ENCODE measurements at regions of chr14 and their contacts with region 1.

Region 1: GRCh38 chr14:57317316-57317715 is 48.5 kb downstream of the AP5M1 start:
- DNase-seq: peak; percentile 81
- ATAC-seq: peak; percentile 72
- H3K4me3 Mint-ChIP-seq: no peak overlapping the region
- H3K27ac Mint-ChIP-seq: no peak overlapping the region
- H3K4me1 Mint-ChIP-seq: peaks cover 4% of the 10 kb centered on the region
- H3K27me3 Mint-ChIP-seq: peaks cover 5% of the 10 kb centered on the region
- CTCF ChIP-seq: peak; percentile 74

Region 2: DNA sequence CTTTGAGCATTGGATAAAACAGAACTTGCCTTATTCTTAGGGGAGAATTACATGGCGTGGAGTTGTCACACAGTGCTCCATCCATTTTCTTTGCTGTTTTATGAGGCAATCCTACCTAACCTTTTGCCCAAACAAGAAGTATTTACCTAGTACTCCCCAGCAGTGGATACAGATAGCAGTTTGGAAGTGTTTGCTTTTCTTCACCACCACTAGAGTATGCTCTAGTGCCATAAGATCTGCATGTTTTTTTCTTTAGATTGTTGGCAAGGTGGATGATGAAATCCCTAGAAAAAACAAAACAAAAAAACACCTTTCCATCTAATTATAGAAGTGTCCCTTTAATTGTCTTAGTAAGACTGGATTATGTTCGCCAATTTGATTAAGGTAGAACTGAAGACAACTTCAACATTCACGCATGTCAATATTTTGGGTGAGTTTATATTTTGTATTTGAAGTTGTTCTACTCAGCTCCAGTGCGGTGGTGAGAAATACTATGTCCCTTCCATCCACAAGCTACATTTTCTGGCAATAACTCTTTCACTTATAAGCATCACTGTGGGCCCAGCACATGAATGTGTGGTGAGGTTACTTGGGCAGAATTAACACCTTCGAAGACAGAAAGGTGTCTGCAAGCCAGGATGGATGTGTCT is 761.3 kb before region 1 on chr14:
- CTCF ChIA-PET with region 1: no interaction called
- POLR2A ChIA-PET with region 1: no interaction called
- intact Hi-C with region 1: loop called (anchors 5 kb)
- DNase-seq: no peak
- ATAC-seq: no peak
- H3K4me3 Mint-ChIP-seq: no peak overlapping the region
- H3K27ac Mint-ChIP-seq: no peak overlapping the region
- H3K4me1 Mint-ChIP-seq: no peaks in the 10 kb centered on the region
- H3K27me3 Mint-ChIP-seq: peaks cover 15% of the 10 kb centered on the region
- CTCF ChIP-seq: no peak

Region 3: DNA sequence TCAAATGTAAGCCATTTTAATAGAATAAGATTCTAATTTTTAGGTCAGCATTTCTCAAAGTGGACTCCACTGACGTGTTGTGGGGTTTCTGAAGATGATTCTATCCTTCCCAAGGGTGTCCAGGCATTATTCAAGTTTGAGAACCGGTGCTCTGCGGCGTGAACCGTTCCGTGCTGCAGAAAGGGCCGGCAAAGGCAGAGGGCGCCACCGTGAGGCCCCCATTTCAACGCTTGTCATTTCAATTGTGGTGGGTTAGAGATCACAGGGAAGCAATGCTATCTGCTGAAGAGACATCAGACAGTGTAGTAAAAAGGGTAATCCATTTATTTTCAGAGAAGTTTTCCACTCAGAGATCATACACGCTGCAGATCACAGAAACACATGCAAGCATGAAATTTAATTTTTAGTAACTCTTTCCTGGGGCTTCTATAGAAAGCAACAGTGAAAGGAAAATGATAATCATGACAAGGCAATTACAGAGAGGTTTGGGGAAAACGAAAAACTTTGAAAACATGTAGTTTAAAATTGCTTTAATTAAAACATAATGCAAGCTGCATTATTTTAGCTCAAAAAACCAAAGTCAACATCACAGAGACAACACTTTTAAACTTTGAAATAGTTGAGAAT is 250.3 kb before region 1 on chr14:
- CTCF ChIA-PET with region 1: interaction called, 3 read pairs
- POLR2A ChIA-PET with region 1: no interaction called
- intact Hi-C with region 1: loop called (anchors 10 kb)
- DNase-seq: peak; percentile 69
- ATAC-seq: peak; percentile 45
- H3K4me3 Mint-ChIP-seq: no peak overlapping the region
- H3K27ac Mint-ChIP-seq: no peak overlapping the region
- H3K4me1 Mint-ChIP-seq: no peaks in the 10 kb centered on the region
- H3K27me3 Mint-ChIP-seq: peaks cover 27% of the 10 kb centered on the region
- CTCF ChIP-seq: peak; percentile 65

Region 4: DNA sequence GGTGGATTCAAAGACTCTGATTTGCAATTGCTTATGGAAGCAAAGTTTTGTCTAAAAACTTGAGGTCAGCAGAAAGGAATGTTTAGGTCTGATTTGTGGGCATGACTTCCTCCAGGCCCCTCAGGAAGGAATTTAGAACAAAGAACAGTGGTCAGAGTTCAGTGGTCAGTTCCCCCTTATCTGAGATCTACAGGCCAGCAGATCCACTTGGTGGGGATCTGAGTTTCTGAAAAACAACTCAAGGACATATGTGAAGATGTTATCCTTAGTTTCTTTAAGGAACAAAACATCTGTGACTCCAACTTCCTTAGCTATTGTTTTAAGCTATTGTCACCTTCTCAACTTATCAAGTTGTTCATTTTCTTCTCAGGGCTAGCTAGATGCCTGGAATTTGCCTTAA is 45.0 kb after region 1 on chr14:
- CTCF ChIA-PET with region 1: no interaction called
- POLR2A ChIA-PET with region 1: no interaction called
- intact Hi-C with region 1: no loop called
- DNase-seq: no peak
- ATAC-seq: no peak
- H3K4me3 Mint-ChIP-seq: no peak overlapping the region
- H3K27ac Mint-ChIP-seq: no peak overlapping the region
- H3K4me1 Mint-ChIP-seq: no peaks in the 10 kb centered on the region
- H3K27me3 Mint-ChIP-seq: peaks cover 12% of the 10 kb centered on the region
- CTCF ChIP-seq: no peak